OCI-LY7 (cell line): ENCODE measurements at regions of chr6 and their contacts with region 1.

Region 1: DNA sequence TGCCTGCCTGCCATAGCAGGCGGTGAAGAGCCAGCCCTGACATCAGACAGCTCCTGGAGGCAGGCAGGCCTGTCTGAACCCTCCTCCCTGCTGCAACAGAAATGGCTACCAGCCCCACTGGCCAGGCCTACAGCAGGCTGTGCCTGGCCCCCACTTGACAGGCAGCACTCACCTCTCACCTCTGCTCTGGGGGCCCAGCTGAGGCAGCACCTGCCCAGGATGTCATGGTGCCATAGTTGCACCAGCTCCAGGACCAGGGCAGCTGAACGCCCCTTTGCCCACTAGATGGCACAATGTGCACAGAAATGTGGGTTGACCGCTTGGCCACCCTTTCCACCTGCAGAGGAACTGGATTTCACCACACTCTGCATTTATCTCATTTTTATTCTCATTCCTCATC is 30.6 kb downstream of the MRPL14 start:
- DNase-seq: peak; percentile 85
- H3K4me3 ChIP-seq: no peak overlapping the region
- H3K27ac ChIP-seq: no peak overlapping the region
- H3K4me1 ChIP-seq: no peaks in the 10 kb centered on the region
- CTCF ChIP-seq: peak; percentile 86

Region 2: DNA sequence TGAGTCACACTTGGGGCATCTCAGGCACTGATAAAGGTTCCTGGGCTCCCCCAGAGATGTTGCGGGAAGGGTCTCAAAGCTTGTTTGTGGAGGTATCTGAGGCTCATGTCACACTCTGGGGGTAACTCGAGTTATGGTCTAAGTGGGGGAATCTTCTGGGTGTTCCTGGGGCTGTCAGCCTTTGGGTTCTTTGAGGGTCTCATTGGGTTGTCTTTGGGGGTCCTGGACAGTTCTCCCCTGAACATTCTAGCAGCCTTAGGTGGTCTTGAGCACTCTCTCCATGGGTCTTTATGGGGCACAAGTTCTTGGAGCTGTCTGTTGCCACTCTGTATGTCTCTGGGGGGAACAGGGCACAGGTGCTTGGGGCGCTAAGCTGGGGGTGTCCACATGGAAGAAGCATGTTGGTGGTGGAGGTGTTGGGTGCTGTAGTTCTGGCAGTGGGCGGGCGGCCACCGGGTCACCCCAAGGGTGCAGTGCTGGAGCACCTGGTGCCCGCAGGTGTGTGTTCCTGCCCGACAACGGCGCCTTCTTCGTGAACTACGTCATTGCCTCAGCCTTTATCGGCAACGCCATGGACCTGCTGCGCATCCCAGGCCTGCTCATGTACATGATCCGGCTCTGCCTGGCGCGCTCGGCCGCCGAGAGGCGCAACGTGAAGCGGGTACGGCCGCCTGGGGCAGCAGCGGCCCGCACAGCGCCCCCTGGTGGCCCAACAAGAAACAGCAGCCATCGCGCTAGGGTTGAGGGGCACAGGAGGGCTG is 54.9 kb after region 1 on chr6:
- CTCF ChIA-PET with region 1: interaction called, 3 read pairs
- POLR2A ChIA-PET with region 1: no interaction called
- intact Hi-C with region 1: loop called (anchors 1 kb)
- DNase-seq: peak; percentile 83
- H3K4me3 ChIP-seq: no peak overlapping the region
- H3K27ac ChIP-seq: no peak overlapping the region
- H3K4me1 ChIP-seq: peaks cover 4% of the 10 kb centered on the region
- CTCF ChIP-seq: peak; percentile 99

Region 3: DNA sequence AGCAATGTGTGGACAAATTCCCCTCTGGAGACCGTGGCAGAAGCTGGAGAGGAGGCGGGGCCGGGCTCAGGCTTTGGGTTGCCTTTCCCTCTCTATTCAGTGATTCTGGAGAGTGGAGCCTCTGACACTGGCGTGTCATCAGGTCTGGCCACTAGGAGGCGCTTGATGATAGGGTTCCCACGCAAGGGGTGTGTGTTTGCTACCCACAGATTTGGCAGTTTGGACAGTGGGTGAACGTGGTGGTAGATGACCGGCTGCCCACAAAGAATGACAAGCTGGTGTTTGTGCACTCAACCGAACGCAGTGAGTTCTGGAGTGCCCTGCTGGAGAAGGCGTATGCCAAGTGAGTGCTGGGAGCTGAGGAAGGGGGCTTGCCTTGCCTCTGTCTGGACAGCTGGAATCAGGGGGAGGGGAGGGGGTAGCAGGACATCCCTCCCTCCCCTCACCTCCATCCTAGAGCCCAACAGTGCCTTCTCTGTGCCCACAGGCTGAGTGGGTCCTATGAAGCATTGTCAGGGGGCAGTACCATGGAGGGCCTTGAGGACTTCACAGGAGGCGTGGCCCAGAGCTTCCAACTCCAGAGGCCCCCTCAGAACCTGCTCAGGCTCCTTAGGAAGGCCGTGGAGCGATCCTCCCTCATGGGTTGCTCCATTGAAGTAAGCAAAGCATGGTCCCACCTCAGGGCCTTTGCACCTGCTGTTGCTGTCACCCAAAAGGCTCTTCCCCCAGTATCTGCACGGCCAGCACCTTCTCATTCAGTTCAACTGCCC is 76.3 kb after region 1 on chr6:
- CTCF ChIA-PET with region 1: no interaction called
- POLR2A ChIA-PET with region 1: interaction called, 10 read pairs
- intact Hi-C with region 1: no loop called
- DNase-seq: peak; percentile 82
- H3K4me3 ChIP-seq: no peak overlapping the region
- H3K27ac ChIP-seq: no peak overlapping the region
- H3K4me1 ChIP-seq: no peaks in the 10 kb centered on the region
- CTCF ChIP-seq: peak; percentile 98

Region 4: GRCh38 chr6:44237813-44238433 is 141.3 kb after region 1 on chr6:
- CTCF ChIA-PET with region 1: no interaction called
- POLR2A ChIA-PET with region 1: no interaction called
- intact Hi-C with region 1: loop called (anchors 2 kb)
- DNase-seq: peak; percentile 84
- H3K4me3 ChIP-seq: peak overlapping the region; percentile 57
- H3K27ac ChIP-seq: no peak overlapping the region
- H3K4me1 ChIP-seq: peaks cover 22% of the 10 kb centered on the region
- CTCF ChIP-seq: peak; percentile 96

Region 5: DNA sequence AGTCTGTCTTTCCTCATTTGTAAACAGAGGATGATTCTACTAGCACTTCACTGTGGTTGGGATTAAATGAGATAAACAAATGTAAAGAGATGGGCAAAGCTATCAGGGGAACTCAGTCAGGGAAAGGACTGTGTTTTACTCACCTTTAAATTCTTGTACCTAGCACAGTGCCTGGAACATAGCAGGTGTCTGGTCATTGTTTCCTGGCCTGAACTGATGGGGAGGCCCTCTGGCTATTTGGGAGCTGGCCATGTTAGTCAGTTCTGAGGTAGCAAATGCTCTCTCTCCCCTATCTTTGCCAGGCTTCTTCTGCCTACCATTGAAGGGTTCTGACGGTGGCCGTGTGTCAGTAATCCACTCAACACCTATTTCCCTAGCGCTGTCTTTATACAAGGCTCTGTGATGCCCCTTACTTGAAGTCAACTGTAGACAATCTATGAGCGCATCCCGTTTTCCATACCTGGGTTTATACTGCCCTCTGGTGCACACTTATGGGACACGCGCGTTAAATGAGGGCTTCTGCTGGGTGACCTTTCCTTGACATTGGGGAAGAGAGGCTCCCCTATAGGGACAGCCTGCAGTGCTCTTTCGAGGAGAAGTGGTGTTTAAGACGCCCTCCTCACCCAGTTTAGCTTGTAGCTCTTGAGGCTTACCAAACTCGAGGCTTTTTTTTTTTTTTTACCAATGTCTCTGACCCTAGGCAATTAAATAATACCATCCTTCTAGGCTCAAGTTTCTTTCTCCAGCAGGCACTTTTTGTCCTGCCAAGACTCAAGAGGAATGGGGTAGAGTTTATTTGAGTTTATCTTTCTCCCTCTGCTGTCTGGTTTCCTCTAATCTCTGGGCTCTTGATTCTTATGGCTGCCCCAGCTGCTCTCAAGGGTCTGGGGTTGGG is 241.9 kb after region 1 on chr6:
- CTCF ChIA-PET with region 1: no interaction called
- POLR2A ChIA-PET with region 1: no interaction called
- intact Hi-C with region 1: loop called (anchors 5 kb)
- DNase-seq: peak; percentile 80
- H3K4me3 ChIP-seq: no peak overlapping the region
- H3K27ac ChIP-seq: no peak overlapping the region
- H3K4me1 ChIP-seq: no peaks in the 10 kb centered on the region
- CTCF ChIP-seq: peak; percentile 86